Heart right ventricle (tissue), 16 donors: ENCODE measurements at regions of chr10 and their contacts with region 1.

Region 1: GRCh38 chr10:18463673-18464211 is 187.6 kb downstream of the NSUN6 start:
- DNase-seq: peak; percentile 29 to 30
- ATAC-seq: peak; percentile 65 to 91 (median 84)
- H3K4me3 ChIP-seq: no peak overlapping the region
- H3K27ac ChIP-seq: peak overlapping the region; percentile 44 to 82 (median 72)
- H3K4me1 ChIP-seq: peaks cover 0 to 32% (median 8%) of the 10 kb centered on the region in 9 donors
- H3K27me3 ChIP-seq: no peaks in the 10 kb centered on the region
- CTCF ChIP-seq: no peak

Region 2: DNA sequence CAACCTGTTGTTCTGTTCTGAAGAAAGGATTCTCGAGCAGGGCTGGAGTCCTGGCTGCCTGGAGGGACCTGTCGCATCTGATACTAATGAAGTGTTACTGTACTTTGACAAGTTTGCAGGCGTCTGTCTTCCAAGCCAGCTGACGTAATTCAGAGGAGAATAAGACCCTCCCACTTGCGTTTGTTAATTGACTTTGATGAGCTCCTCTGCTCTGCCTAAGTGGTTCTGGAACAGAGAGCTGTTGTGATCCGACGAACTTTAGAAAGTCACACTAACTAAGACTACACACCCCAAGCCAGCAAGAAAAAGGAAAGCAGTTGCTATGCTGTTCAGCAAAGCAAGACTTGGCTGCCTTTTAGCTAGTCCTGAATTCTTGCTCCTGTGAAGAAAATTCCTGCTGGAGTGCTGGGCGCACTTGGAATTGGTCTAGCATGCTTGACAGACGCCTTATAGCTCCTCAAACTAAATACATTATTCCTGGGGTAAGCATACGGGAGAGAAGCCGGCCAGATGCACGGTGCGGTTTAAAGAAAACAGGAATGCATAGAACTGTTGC is 123.2 kb before region 1 on chr10:
- intact Hi-C with region 1: loop called in 3 of 10 experiments (anchors 10 kb)
- DNase-seq: peak; percentile 29 to 37
- ATAC-seq: peak; percentile 53 to 95 (median 88)
- H3K4me3 ChIP-seq: peak overlapping the region in 9 of 10 donors; percentile 38 to 67 (median 54)
- H3K27ac ChIP-seq: peak overlapping the region; percentile 64 to 87 (median 79)
- H3K4me1 ChIP-seq: peaks cover 0 to 5% (median 0%) of the 10 kb centered on the region in 9 donors
- H3K27me3 ChIP-seq: no peaks in the 10 kb centered on the region
- CTCF ChIP-seq: no peak

Region 3: DNA sequence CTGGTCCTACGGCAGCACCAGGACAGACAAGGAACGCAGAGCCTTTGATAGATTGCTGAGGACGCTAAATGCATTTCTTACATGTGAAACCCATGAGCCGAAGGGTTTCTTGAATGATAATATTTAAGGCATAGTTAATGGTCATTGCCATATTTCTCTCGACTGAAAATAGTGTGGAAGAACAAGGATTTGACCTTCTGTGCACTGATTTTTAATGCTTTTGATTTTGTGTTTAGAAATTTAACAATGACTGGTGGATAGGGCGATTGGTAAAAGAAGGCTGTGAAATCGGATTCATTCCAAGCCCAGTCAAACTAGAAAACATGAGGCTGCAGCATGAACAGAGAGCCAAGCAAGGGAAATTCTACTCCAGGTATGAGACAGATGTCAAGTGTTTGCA is 36.8 kb after region 1 on chr10:
- intact Hi-C with region 1: loop called in 1 of 10 experiments (anchors 1 kb)
- DNase-seq: no peak
- ATAC-seq: no peak
- H3K4me3 ChIP-seq: no peak overlapping the region
- H3K27ac ChIP-seq: no peak overlapping the region
- H3K4me1 ChIP-seq: peaks cover 0 to 17% (median 5%) of the 10 kb centered on the region in 9 donors
- H3K27me3 ChIP-seq: no peaks in the 10 kb centered on the region
- CTCF ChIP-seq: no peak